Activated T-helper 1 cell treated with anti-CD3 and anti-CD28 coated beads, Interleukin-12 subunit alpha, Interleukin-12 subunit beta, Interleukin-2, Interleukin-4 antibody, amounts not matched to agents 30 ng/mL and 10 ng/mL and 1 ng/mL, durations not matched to agents 14 hours and 24 hours and 36 hours (primary cell): ENCODE measurements at regions of chr2 and their contacts with region 1.

Region 1: GRCh38 chr2:73611867-73612266 is 30.4 kb downstream of the NAT8 start:
- DNase-seq: no peak
- H3K4me3 Mint-ChIP-seq: no peak overlapping the region
- H3K27ac Mint-ChIP-seq: no peak overlapping the region
- H3K4me1 Mint-ChIP-seq: peaks cover 8% of the 10 kb centered on the region
- H3K27me3 Mint-ChIP-seq: peaks cover 16% of the 10 kb centered on the region

Region 2: DNA sequence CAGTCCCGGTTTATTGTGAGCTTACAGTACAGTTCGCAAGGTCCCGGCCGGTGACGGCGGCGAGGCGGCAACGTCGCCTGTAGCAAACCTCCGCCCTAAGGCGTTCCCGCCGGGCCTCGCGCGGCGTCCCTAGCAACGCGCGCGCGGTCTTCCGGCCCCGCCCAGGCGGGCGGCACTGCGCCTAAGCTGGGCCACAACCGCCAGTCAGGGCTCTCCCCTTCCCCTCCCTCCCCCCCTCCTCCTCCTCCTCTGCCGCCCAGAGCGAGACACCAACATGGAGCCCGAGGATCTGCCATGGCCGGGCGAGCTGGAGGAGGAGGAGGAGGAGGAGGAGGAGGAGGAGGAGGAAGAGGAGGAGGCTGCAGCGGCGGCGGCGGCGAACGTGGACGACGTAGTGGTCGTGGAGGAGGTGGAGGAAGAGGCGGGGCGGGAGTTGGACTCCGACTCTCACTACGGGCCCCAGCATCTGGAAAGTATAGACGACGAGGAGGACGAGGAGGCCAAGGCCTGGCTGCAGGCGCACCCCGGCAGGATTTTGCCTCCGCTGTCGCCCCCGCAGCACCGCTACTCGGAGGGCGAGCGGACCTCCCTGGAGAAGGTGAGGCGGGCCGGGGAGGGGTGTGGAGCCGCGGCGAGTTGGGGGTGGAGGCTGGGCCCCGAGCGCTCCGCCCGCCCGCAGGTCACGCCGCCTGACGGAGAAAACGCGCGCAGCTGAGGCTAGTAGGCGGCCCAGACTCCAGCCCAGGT is 226.1 kb before region 1 on chr2 and contains the start of gene ALMS1:
- intact Hi-C with region 1: loop called (anchors 5 kb)
- DNase-seq: peak; percentile 88
- H3K4me3 Mint-ChIP-seq: peak within 1 kb of the TSS; percentile 92
- H3K27ac Mint-ChIP-seq: peak within 1 kb of the TSS; percentile 90
- H3K4me1 Mint-ChIP-seq: peaks cover 37% of the 10 kb centered on the region
- H3K27me3 Mint-ChIP-seq: no peaks in the 10 kb centered on the region
- total RNA-seq, gene ALMS1: 18.2 and 19.4 TPM in 2 replicates

Region 3: DNA sequence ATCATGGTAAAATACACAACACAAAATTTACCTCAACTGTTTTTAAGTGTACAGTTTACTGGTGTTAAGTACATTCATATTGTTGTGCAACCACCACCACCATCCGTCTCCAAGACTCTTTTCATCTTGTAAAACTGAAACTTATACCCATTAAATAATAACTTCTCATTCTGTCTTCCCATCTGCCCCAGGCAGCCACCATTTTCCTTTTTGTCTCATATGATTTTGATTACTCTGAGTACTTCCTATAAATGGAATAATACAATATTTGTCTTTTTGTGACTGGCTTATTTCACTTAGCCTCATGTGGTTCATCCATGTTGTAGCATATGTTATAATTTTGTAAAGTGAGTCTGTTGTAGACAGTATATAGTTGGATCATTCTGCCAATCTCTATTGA is 143.5 kb before region 1 on chr2:
- intact Hi-C with region 1: no loop called
- DNase-seq: no peak
- H3K4me3 Mint-ChIP-seq: no peak overlapping the region
- H3K27ac Mint-ChIP-seq: no peak overlapping the region
- H3K4me1 Mint-ChIP-seq: no peaks in the 10 kb centered on the region
- H3K27me3 Mint-ChIP-seq: no peaks in the 10 kb centered on the region